ENCODE measurements at regions of chr18 and their contacts with region 1.

Region 1: DNA sequence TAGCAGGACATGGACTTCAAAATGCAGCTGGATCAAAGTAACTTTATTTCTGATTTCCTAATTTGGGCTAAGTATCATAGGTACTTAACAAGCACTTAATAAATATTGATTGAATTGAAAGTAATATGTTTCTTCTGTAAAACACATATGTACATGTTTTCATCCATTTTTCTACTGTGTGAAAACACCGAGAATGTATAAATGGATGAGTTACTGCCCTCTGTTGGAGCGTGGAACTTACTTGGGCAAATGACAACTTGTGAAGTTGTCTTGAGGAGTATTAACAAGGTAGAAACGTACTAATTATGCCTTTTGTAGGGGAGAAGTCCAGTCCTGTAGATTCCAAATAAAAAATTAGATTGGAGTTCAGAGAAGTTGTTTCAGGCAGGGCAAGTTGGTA is 87.2 kb downstream of the PHLPP1 start:
- DNase-seq: peak; percentile 47
- H3K4me3 Mint-ChIP-seq: no peak overlapping the region
- H3K27ac Mint-ChIP-seq: no peak overlapping the region
- H3K4me1 Mint-ChIP-seq: peaks cover 5% of the 10 kb centered on the region
- H3K27me3 Mint-ChIP-seq: no peaks in the 10 kb centered on the region
- CTCF ChIP-seq: peak; percentile 40

Region 2: DNA sequence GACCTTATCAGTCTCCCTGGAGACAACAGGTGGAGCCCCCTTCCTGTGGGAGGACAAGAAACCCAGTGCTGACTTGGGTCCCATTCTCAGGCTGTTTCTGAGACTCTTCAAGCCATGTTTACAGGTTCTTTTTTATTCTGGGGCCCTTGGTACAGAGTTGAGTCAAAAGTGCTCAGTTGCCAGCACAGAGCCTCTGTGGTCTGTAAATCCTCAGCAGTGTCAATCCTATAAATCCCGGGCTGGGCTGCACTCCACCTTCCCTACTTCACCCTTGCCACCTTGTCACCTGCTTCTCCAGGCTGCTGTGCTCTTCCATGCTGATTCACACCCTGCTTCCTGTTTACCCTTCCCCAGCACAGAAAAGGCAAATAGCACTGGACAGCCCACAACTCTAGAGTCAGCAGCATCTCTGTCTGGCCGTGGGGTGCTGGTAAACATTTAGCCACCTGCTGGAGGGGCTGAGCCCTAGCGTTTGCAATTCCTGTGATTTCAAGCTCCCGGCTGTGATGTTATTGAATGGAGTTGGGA is 402.7 kb before region 1 on chr18:
- CTCF ChIA-PET with region 1: no interaction called
- POLR2A ChIA-PET with region 1: no interaction called
- intact Hi-C with region 1: no loop called
- DNase-seq: peak; percentile 42
- H3K4me3 Mint-ChIP-seq: no peak overlapping the region
- H3K27ac Mint-ChIP-seq: no peak overlapping the region
- H3K4me1 Mint-ChIP-seq: no peaks in the 10 kb centered on the region
- H3K27me3 Mint-ChIP-seq: no peaks in the 10 kb centered on the region
- CTCF ChIP-seq: peak; percentile 11

Region 3: DNA sequence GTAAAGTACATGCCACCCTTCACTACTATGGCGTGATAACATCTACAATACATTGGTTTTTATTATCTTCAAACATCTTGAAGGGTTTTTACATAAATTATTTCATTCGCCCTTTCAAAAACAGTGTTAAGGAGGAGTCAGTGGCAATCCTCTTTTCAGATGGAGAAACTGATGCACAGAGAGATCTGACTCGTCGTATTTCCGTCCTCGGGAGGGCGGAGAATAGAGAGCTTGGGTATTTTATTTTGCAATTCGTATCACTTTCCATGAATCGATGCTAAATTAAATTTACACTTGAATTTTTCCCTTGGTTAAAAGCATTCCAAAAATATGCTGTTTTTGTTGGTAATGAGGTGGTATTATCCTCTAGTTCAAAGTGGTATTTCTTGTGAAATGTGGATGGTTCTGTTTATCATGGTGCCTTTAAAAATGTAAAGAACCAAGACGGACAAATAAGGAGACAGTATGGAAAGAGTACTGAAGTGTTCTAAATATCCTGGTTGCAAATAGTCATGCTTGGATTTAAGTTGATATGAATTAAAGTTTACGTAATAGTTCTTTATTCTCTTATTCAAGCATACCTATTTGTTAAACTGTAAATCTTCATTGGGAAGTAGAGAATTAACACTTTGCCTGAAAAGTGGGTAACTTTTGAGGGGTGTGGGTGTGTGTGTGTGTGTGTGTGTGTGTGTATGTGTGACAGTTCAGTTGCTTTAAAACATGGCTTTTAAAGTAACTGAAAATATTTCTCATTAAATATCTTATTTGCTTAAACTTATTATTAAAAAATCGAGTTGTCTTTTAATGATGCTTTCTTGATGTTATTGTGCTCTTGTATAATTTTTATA is 81.5 kb before region 1 on chr18:
- CTCF ChIA-PET with region 1: interaction called, 18 read pairs
- POLR2A ChIA-PET with region 1: interaction called, 62 read pairs
- intact Hi-C with region 1: loop called (anchors 1 kb)
- DNase-seq: no peak
- H3K4me3 Mint-ChIP-seq: no peak overlapping the region
- H3K27ac Mint-ChIP-seq: no peak overlapping the region
- H3K4me1 Mint-ChIP-seq: peaks cover 35% of the 10 kb centered on the region
- H3K27me3 Mint-ChIP-seq: no peaks in the 10 kb centered on the region
- CTCF ChIP-seq: no peak

Region 4: DNA sequence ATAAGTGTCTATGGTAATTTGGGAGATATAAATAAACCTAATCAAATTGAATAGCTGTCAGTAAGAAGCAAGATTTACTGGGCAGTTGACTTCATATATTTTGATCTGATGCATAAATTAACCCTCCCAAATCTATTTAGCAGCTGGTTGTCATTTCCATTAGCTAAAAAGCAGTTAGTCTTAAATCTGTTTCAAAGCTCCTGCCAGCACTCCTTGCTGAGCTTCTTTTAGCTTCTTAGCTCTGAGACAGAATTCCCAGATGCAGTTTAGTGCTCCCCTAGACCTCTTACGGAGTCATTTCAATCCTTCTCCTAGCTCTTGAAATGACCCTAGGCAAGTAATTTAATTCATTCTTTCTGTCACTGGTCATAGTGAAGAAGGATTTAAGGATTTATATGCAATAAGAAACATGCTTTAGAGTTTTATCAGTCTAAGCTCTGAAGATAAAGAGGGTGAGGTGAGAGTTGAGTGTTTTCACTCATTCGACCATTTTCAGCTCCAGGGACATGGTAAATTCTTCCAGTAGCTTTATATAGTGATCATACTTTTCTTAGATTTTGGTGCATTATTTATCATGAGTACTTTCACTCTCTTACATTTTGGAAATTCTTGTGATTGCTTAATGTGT is 11.7 kb after region 1 on chr18:
- CTCF ChIA-PET with region 1: interaction called, 12 read pairs
- POLR2A ChIA-PET with region 1: interaction called, 5 read pairs
- intact Hi-C with region 1: no loop called
- DNase-seq: no peak
- H3K4me3 Mint-ChIP-seq: no peak overlapping the region
- H3K27ac Mint-ChIP-seq: no peak overlapping the region
- H3K4me1 Mint-ChIP-seq: peaks cover 12% of the 10 kb centered on the region
- H3K27me3 Mint-ChIP-seq: no peaks in the 10 kb centered on the region
- CTCF ChIP-seq: no peak

Region 5: GRCh38 chr18:62938487-62938886 is 136.0 kb after region 1 on chr18:
- CTCF ChIA-PET with region 1: no interaction called
- POLR2A ChIA-PET with region 1: interaction called, 3 read pairs
- intact Hi-C with region 1: loop called (anchors 10 kb)
- DNase-seq: no peak
- H3K4me3 Mint-ChIP-seq: no peak overlapping the region
- H3K27ac Mint-ChIP-seq: no peak overlapping the region
- H3K4me1 Mint-ChIP-seq: peaks cover 15% of the 10 kb centered on the region
- H3K27me3 Mint-ChIP-seq: no peaks in the 10 kb centered on the region
- CTCF ChIP-seq: no peak

Region 6: GRCh38 chr18:62982600-62983251 is 180.2 kb after region 1 on chr18:
- CTCF ChIA-PET with region 1: interaction called, 16 read pairs
- POLR2A ChIA-PET with region 1: no interaction called
- intact Hi-C with region 1: no loop called
- DNase-seq: peak; percentile 71
- H3K4me3 Mint-ChIP-seq: no peak overlapping the region
- H3K27ac Mint-ChIP-seq: no peak overlapping the region
- H3K4me1 Mint-ChIP-seq: peaks cover 6% of the 10 kb centered on the region
- H3K27me3 Mint-ChIP-seq: no peaks in the 10 kb centered on the region
- CTCF ChIP-seq: peak; percentile 73

Measured in MCF 10A (cell line).